ENCODE measurements at regions of chr2 and their contacts with region 1.

Region 1: GRCh38 chr2:43226558-43226954 is at the start of gene ZFP36L2:
- DNase-seq: peak; percentile 95
- H3K4me3 Mint-ChIP-seq: peak within 1 kb of the TSS; percentile 87
- H3K27ac Mint-ChIP-seq: peak within 1 kb of the TSS; percentile 97
- H3K4me1 Mint-ChIP-seq: peaks cover 27% of the 10 kb centered on the region
- H3K27me3 Mint-ChIP-seq: peaks cover 12% of the 10 kb centered on the region

Region 2: DNA sequence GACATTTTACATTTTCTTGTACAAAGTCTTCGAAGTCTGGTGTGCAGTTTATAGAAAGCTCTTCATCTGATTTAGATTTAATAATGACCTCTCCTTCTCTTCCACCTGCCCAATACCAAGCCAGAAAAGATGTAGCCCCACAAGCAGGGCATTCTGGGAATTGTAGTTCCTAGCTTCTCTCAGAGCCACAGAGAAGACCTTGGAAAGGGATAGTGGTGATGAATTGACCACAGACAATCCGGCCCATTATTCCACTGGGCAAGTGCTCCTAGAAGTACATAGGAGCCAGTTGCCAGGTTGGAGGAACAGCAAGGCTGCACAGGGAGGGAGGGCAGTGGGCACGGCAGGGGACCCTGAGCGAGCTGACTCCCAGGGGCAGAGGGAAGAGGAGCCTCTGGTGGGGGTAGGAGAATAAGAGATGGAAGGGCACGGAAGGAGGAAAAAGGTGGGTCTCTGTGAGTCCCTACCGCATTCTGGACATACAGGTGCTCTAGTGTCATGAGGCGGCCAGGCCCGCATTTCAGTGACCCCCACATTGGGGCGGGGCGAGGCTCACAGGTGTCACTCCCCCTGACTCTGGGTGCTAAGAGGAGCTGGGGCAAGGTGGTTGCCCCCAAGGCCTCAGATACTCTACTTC is 281.7 kb before region 1 on chr2:
- CTCF ChIA-PET with region 1: interaction called, 57 read pairs
- DNase-seq: no peak
- H3K4me3 Mint-ChIP-seq: no peak overlapping the region
- H3K27ac Mint-ChIP-seq: no peak overlapping the region
- H3K4me1 Mint-ChIP-seq: peaks cover 3% of the 10 kb centered on the region
- H3K27me3 Mint-ChIP-seq: peaks cover 17% of the 10 kb centered on the region

Region 3: DNA sequence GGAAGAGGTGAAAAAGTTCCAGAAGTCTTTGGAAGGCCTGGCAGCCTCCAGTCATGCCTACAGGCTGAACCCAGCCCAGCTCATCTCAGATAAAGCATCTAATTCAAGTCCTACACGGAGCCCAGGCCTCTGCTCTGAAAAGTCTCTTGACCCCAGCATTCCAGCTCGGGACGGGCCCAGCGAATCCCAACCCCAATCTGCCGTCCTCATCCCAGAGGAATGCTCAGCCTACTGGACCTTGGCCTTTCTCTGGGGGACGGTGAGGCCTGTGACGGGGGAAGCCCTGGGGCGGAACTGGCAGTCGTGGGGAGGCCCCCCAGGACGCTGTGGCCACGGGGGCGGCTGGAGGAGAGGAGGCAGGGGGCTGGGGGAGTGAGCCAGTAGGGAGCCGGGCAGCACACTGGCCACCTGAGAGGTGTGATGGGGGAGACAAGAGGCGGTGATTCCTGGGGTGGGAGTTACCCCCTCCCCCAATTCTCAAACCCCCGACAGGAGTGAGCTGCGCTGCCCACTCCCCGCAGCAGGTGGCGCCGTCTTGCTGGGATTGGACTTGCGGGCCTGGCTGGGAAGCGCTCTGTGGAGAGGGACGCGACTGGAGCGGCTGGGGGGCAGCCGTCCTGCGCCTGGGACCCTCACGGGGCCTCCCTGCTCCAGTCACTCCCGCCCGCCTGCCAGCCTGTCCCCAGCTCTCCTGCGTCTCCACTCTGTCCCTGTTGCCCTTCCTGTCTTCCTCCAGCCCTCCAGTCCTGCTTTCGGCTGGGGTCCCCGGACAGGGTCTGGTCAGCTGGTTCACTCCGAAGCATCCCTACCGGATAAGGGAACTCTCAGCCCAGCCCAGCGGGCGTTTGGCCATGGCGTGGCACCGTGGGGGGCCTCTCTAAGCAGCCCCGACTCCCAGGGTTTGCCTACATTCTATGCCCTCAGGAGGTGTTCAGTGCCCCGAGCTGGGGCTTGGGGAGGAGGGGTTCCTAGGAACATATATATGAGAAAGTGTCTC is 251.5 kb before region 1 on chr2:
- CTCF ChIA-PET with region 1: interaction called, 71 read pairs
- DNase-seq: peak; percentile 70
- H3K4me3 Mint-ChIP-seq: no peak overlapping the region
- H3K27ac Mint-ChIP-seq: no peak overlapping the region
- H3K4me1 Mint-ChIP-seq: peaks cover 24% of the 10 kb centered on the region
- H3K27me3 Mint-ChIP-seq: peaks cover 30% of the 10 kb centered on the region

Region 4: DNA sequence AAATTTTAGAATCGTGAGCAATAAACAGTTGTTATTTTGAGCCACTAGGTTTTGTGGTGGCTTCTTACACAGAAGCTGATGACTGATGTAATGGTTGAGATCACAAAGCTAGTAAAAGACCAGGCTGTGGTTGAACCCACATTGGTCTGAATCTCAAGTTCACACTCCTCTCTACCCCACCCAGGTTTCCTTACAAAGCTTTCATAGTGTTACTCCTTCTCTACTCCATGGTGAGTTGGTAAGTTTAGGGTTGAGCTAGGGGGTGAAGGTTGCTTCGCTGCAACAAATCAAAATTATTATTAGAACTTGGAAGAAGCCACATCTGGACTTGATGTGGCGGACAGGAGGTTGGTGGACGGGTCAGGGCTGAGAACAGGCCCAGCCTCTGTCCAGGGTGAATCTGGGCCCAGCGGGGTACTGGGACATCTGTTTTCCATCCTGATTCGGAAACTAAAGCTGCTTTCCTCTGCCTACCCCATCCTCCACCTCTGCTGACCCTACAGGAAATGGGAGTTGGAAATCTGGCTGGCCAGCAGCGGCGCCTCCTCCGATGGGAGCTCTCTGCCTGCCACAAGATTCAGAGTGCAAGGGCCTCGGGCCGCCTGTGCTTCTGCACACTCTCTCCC is 86.4 kb before region 1 on chr2:
- CTCF ChIA-PET with region 1: interaction called, 460 read pairs
- DNase-seq: peak; percentile 60
- H3K4me3 Mint-ChIP-seq: peak overlapping the region; percentile 34
- H3K27ac Mint-ChIP-seq: peak overlapping the region; percentile 99
- H3K4me1 Mint-ChIP-seq: peaks cover 87% of the 10 kb centered on the region
- H3K27me3 Mint-ChIP-seq: no peaks in the 10 kb centered on the region

Region 5: DNA sequence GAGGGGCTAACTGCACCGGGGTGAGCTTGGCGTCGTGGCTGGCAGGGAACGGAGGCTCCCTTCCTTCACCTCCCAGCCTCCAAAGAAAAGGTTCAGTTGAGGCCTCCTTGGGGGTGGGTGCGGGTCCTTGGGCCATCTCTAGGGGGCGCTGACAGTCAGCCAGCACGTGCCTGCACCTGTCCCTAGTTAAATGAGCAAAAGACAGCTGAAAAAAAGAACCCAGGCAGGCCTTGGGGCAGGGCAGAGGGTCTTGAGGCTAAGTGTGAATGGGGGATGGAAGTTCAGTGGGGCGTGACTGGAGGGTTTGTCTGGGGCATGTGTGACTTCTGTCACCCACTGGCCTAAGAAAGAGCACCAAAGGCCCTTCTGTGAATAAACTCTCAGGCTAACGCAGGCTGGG is 56.6 kb before region 1 on chr2:
- CTCF ChIA-PET with region 1: interaction called, 88 read pairs
- DNase-seq: peak; percentile 83
- H3K4me3 Mint-ChIP-seq: peak overlapping the region; percentile 76
- H3K27ac Mint-ChIP-seq: peak overlapping the region; percentile 95
- H3K4me1 Mint-ChIP-seq: peaks cover 86% of the 10 kb centered on the region
- H3K27me3 Mint-ChIP-seq: peaks cover 4% of the 10 kb centered on the region

Region 6: GRCh38 chr2:43484323-43484930 is 257.9 kb after region 1 on chr2:
- CTCF ChIA-PET with region 1: interaction called, 58 read pairs
- DNase-seq: no peak
- H3K4me3 Mint-ChIP-seq: no peak overlapping the region
- H3K27ac Mint-ChIP-seq: no peak overlapping the region
- H3K4me1 Mint-ChIP-seq: no peaks in the 10 kb centered on the region
- H3K27me3 Mint-ChIP-seq: no peaks in the 10 kb centered on the region

Region 7: GRCh38 chr2:43524177-43524965 is 297.8 kb after region 1 on chr2:
- CTCF ChIA-PET with region 1: no interaction called
- DNase-seq: no peak
- H3K4me3 Mint-ChIP-seq: no peak overlapping the region
- H3K27ac Mint-ChIP-seq: no peak overlapping the region
- H3K4me1 Mint-ChIP-seq: no peaks in the 10 kb centered on the region
- H3K27me3 Mint-ChIP-seq: no peaks in the 10 kb centered on the region

Region 8: GRCh38 chr2:43611987-43612894 is 385.7 kb after region 1 on chr2:
- CTCF ChIA-PET with region 1: no interaction called
- DNase-seq: peak; percentile 81
- H3K4me3 Mint-ChIP-seq: no peak overlapping the region
- H3K27ac Mint-ChIP-seq: no peak overlapping the region
- H3K4me1 Mint-ChIP-seq: no peaks in the 10 kb centered on the region
- H3K27me3 Mint-ChIP-seq: peaks cover 8% of the 10 kb centered on the region

Measured in activated naive CD4-positive, alpha-beta T cell treated with anti-CD3 and anti-CD28 coated beads, Interleukin-2, amount 10 ng/mL, durations not matched to agents 7 days and 5 days (primary cell).